Activated T-helper 2 cell treated with anti-CD3 and anti-CD28 coated beads, Interferon-gamma antibody, Interleukin-2, Interleukin-4, amounts not matched to agents 10 μg/mL and 5 μg/mL and 100 μg/mL, durations not matched to agents 14 hours and 24 hours and 36 hours (primary cell): ENCODE measurements at regions of chr10 and their contacts with region 1.

Region 1: DNA sequence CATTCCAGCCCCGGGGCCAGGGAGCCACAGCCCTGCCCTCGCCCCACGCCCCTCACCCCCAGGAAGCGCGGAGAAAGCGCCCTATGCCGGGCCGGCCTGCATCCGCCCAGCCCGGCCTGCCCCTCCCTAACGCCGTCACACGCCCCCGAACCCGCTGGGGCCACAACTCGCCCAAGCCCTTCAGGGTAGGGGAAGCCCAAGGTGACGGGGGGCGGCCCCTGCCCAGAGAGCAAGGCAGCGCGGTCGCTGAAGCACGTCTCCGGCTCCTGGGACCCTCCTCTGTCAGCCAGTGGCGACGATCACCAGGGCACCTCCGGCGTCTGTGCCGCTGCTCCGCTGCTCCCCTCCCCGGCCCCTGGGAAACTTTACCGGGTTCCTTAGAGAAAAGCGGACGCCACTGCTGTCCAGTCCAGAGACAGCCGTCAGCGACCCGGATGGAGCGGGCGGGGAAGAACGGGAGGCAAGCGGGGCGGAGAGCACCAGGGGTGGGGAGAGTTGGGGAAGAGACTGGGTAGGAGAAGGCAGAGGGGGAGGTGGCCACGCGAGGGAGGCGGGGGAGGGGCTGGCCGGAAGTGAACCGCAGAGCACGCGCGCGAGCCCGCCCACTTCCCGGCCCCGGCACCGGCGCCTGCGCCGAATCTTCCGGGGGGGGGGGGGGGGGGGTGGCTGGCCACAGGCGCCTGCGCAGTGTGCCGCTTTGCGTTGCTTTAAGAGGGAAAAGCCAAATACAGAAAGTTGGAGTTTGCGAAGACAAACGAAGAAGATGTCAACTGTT is at the start of gene HERC4:
- DNase-seq: peak; percentile 83
- H3K4me3 Mint-ChIP-seq: peak within 1 kb of the TSS; percentile 96
- H3K27ac Mint-ChIP-seq: peak within 1 kb of the TSS; percentile 92
- H3K4me1 Mint-ChIP-seq: peaks cover 42% of the 10 kb centered on the region
- H3K27me3 Mint-ChIP-seq: no peaks in the 10 kb centered on the region
- total RNA-seq, gene HERC4: 48.9 and 55.7 TPM in 2 replicates

Region 2: DNA sequence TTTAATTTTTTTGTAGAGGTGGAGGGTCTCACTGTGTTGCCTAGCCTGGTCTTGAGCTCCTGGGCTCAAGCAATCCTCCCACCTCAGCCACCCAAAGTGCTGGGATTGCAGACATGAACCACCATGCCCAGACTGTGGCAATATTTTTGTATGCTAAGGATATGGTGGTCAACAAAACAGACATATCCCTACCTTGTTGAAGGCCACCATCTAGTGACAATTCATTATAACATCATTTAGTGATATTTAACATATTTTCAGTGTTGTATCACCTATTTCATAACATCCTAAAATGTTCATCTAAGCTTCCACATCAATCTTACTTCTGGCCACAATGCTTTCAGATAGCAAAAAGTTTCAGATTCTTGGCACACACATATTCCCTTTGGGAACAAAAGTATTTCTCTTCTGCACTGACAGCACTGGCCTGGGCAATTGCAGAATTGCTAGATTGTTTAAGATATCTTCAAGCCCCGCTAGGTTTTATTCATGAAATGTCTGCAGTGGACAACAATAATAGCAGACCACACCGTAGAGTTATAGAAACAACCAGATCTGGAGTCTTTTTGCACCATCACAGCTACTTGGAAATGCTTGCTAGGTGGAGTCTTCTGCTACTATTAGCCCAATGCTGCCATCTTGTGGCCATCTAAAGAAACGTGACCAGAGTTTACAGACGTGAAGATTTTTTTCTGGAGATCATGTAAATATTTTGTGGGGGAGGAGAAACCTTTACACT is 295.3 kb before region 1 on chr10:
- intact Hi-C with region 1: loop called (anchors 10 kb)
- DNase-seq: peak; percentile 60
- H3K4me3 Mint-ChIP-seq: no peak overlapping the region
- H3K27ac Mint-ChIP-seq: no peak overlapping the region
- H3K4me1 Mint-ChIP-seq: peaks cover 45% of the 10 kb centered on the region
- H3K27me3 Mint-ChIP-seq: no peaks in the 10 kb centered on the region

Region 3: GRCh38 chr10:67884313-67884841 is 190.6 kb before region 1 on chr10 and contains the start of gene SIRT1:
- intact Hi-C with region 1: loop called (anchors 1 kb)
- DNase-seq: peak; percentile 93
- H3K4me3 Mint-ChIP-seq: peak within 1 kb of the TSS; percentile 91
- H3K27ac Mint-ChIP-seq: peak within 1 kb of the TSS; percentile 97
- H3K4me1 Mint-ChIP-seq: peaks cover 19% of the 10 kb centered on the region
- H3K27me3 Mint-ChIP-seq: peaks cover 2% of the 10 kb centered on the region
- total RNA-seq, gene SIRT1: 25.3 and 25.6 TPM in 2 replicates

Region 4: DNA sequence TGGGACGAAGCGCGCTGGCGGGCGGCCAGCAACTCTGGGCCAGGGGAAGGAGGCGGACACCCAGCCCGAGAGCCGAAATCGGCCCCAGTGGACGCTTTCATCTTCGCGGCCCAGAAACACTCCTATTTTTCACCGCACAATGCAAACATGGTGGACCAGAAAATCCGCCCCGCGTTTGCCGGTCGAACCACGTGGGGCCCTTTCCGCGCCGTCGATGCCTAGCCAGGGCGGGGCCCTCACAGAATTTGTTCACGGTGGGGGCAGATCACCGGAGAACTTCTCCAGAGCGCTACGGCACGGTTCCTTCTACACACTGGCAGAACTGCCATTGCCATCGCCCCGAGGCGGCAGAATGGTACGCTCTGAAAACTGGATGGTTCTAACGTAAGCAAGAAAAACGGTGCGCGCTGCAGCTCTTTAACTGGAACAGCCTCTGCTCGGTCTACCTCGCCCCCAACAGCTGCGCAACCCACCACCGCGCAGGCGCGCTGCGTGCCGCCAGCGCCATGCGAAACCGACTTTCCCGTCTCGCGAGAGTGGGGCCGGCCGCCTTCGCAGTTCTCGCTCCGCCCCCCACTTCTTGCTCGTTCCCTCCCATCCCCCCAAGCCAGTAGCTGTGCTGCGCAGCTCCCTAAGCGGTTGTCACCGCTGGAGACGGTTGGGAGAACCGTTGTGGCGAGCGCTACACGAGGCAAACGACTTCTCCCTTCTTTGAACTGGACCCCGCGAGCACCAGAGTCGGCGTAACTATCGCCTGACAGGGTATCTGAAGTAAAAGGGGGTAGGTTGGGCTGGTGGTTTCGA is 256.7 kb after region 1 on chr10 and contains the start of gene HNRNPH3:
- intact Hi-C with region 1: loop called (anchors 1 kb)
- DNase-seq: peak; percentile 98
- H3K4me3 Mint-ChIP-seq: peak within 1 kb of the TSS; percentile 99
- H3K27ac Mint-ChIP-seq: peak within 1 kb of the TSS; percentile 100
- H3K4me1 Mint-ChIP-seq: peaks cover 45% of the 10 kb centered on the region
- H3K27me3 Mint-ChIP-seq: no peaks in the 10 kb centered on the region
- total RNA-seq, gene HNRNPH3: 172 and 183 TPM in 2 replicates